GM12878 (cell line): ENCODE measurements at regions of chr10 and their contacts with region 1.

Region 1: GRCh38 chr10:110007701-110008517 is at the start of gene ADD3:
- DNase-seq: peak; percentile 48
- ATAC-seq: peak; percentile 81
- H3K4me3 ChIP-seq: peak within 1 kb of the TSS; percentile 90
- H3K27ac ChIP-seq: peak within 1 kb of the TSS; percentile 56
- H3K4me1 ChIP-seq: peaks cover 27% of the 10 kb centered on the region
- H3K27me3 ChIP-seq: no peaks in the 10 kb centered on the region
- CTCF ChIP-seq: no peak
- EP300 ChIP-seq: no peak
- POLR2A ChIP-seq: peak; percentile 79
- RAD21 ChIP-seq: no peak
- polyA plus RNA-seq, gene ADD3: 27.3 to 28.5 TPM

Region 2: GRCh38 chr10:109934958-109935706 is 72.8 kb before region 1 on chr10:
- CTCF ChIA-PET with region 1: no interaction called
- POLR2A ChIA-PET with region 1: no interaction called
- RAD21 ChIA-PET with region 1: no interaction called
- SMC1A ChIA-PET with region 1: no interaction called
- in situ Hi-C with region 1: no loop called
- intact Hi-C with region 1: no loop called
- DNase-seq: no peak
- ATAC-seq: no peak
- H3K4me3 ChIP-seq: no peak overlapping the region
- H3K27ac ChIP-seq: no peak overlapping the region
- H3K4me1 ChIP-seq: no peaks in the 10 kb centered on the region
- H3K27me3 ChIP-seq: no peaks in the 10 kb centered on the region
- CTCF ChIP-seq: no peak
- EP300 ChIP-seq: no peak
- POLR2A ChIP-seq: no peak
- RAD21 ChIP-seq: no peak

Region 3: DNA sequence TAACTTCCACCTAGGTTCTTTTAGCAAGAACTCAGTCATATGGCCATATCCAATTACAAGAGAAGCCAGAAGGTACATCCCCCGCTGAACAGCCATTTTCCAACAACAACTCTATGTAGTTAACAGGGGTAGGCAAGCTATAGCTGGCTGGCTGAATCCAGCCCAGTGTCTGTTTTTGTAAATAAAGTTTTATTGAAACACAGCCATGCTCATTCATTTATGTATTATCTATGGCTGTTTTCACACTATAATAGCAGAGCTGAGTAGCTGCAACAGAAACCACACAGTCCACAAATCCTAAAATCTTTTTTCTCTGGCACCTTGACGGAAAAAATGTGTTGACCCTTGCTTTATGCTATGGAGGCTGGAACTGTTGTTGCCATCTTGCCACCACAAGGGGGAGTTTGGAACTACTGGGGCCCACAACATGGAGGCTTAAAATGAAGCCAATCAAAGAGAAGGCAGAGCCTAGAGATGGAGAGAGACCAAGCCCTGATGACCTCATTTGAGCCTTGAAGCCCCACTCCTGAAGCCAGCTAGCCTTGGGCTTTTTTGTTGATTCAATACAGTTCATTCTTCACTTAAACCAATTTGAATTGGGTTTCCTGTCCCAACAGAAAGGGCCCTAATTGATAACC is 51.3 kb before region 1 on chr10:
- CTCF ChIA-PET with region 1: interaction called, 4 read pairs
- POLR2A ChIA-PET with region 1: interaction called, 3 read pairs
- RAD21 ChIA-PET with region 1: interaction called, 7 read pairs
- SMC1A ChIA-PET with region 1: interaction called, 8 read pairs
- in situ Hi-C with region 1: no loop called
- intact Hi-C with region 1: loop called (anchors 5 kb)
- DNase-seq: no peak
- ATAC-seq: peak; percentile 87
- H3K4me3 ChIP-seq: no peak overlapping the region
- H3K27ac ChIP-seq: peak overlapping the region; percentile 55
- H3K4me1 ChIP-seq: peaks cover 23% of the 10 kb centered on the region
- H3K27me3 ChIP-seq: no peaks in the 10 kb centered on the region
- CTCF ChIP-seq: peak; percentile 57 to 76 (median 67)
- EP300 ChIP-seq: no peak
- POLR2A ChIP-seq: no peak
- RAD21 ChIP-seq: peak; percentile 58

Region 4: DNA sequence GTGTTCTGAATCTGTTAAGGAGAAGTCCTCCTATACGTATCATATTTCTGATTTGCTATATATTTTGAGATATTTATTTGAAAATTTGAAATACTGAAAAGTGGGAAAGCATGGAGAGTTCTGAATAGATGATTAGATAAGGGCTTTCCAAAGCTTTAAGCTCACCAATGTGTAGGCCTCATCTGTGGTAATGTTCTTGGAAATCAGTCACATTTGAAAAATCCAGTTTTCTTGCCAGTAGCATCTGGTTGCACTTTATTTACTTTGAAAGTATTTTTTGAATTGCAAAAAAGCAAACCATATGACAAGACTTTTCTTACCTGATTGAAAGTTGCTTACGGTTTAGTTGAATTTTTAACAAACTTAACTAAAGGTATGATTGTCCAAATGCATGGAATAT is 21.5 kb after region 1 on chr10:
- CTCF ChIA-PET with region 1: interaction called, 8 read pairs
- POLR2A ChIA-PET with region 1: interaction called, 12 read pairs
- RAD21 ChIA-PET with region 1: interaction called, 3 read pairs
- SMC1A ChIA-PET with region 1: interaction called, 15 read pairs
- in situ Hi-C with region 1: no loop called
- intact Hi-C with region 1: no loop called
- DNase-seq: no peak
- ATAC-seq: no peak
- H3K4me3 ChIP-seq: no peak overlapping the region
- H3K27ac ChIP-seq: no peak overlapping the region
- H3K4me1 ChIP-seq: no peaks in the 10 kb centered on the region
- H3K27me3 ChIP-seq: no peaks in the 10 kb centered on the region
- CTCF ChIP-seq: no peak
- EP300 ChIP-seq: no peak
- POLR2A ChIP-seq: no peak
- RAD21 ChIP-seq: no peak

Region 5: GRCh38 chr10:110067960-110068770 is 60.3 kb after region 1 on chr10:
- CTCF ChIA-PET with region 1: interaction called, 3 read pairs
- POLR2A ChIA-PET with region 1: interaction called, 10 read pairs
- RAD21 ChIA-PET with region 1: interaction called, 17 read pairs
- SMC1A ChIA-PET with region 1: interaction called, 4 read pairs
- in situ Hi-C with region 1: no loop called
- intact Hi-C with region 1: no loop called
- DNase-seq: no peak
- ATAC-seq: peak; percentile 75
- H3K4me3 ChIP-seq: no peak overlapping the region; the same call in none of the 2 replicates
- H3K27ac ChIP-seq: peak overlapping the region; percentile 95
- H3K4me1 ChIP-seq: peaks cover 62% of the 10 kb centered on the region
- H3K27me3 ChIP-seq: no peaks in the 10 kb centered on the region
- CTCF ChIP-seq: no peak
- EP300 ChIP-seq: no peak
- POLR2A ChIP-seq: no peak
- RAD21 ChIP-seq: no peak

Region 6: GRCh38 chr10:110081911-110082310 is 74.0 kb after region 1 on chr10:
- CTCF ChIA-PET with region 1: interaction called, 3 read pairs
- POLR2A ChIA-PET with region 1: interaction called, 4 read pairs
- RAD21 ChIA-PET with region 1: interaction called, 60 read pairs
- SMC1A ChIA-PET with region 1: interaction called, 43 read pairs
- in situ Hi-C with region 1: no loop called
- intact Hi-C with region 1: loop called (anchors 2 kb)
- DNase-seq: no peak
- ATAC-seq: peak; percentile 11
- H3K4me3 ChIP-seq: no peak overlapping the region
- H3K27ac ChIP-seq: peak overlapping the region; percentile 57; the same call in 1 of the 2 replicates
- H3K4me1 ChIP-seq: peaks cover 22% of the 10 kb centered on the region
- H3K27me3 ChIP-seq: no peaks in the 10 kb centered on the region
- CTCF ChIP-seq: no peak
- EP300 ChIP-seq: no peak
- POLR2A ChIP-seq: no peak
- RAD21 ChIP-seq: no peak

Region 7: DNA sequence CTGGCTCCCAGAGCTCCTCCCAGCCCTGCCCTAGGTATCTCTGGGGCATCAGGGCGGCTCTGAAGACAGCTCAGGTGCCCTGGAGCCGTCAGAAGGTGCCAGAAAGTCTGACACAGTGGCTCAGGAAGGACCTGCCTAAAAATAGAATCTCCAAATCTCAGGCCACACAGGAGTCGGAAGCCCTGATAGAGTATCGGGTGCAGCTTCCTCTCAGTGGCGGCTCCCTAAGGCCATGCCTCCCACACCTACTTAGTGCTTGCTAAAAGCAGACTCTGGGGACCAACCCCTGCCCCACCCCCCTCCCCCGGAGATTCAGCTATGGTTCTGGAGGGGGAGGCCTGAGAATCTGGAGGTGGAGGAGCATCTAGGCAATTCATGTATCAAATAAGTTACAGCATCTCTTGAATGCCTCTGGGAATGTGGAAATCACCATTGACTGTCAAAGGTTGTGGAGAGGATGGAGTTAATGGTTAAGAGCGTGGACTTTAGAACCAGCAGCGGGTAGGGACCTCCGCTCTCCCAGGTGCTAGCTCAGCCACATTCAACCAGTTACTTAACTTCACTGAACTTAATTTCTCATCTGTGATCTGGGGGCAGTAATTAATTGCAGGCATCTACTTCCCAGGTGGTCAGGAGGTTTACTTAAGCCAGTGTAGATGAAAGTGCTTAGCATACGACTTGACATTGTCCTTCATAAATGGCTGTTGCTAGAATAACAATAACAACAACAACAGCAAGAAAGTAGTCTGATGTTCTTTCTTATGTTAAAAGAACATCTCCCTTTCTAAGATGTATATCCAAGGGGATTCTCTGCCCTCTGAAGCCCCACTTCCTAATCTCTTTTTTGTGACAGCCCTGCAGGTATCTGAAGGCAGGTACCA is 160.9 kb after region 1 on chr10:
- CTCF ChIA-PET with region 1: no interaction called
- POLR2A ChIA-PET with region 1: no interaction called
- RAD21 ChIA-PET with region 1: no interaction called
- SMC1A ChIA-PET with region 1: no interaction called
- in situ Hi-C with region 1: no loop called
- intact Hi-C with region 1: no loop called
- DNase-seq: no peak
- ATAC-seq: no peak; the same call in 2 of the 3 replicates
- H3K4me3 ChIP-seq: no peak overlapping the region
- H3K27ac ChIP-seq: no peak overlapping the region
- H3K4me1 ChIP-seq: no peaks in the 10 kb centered on the region; the same call in 1 of the 2 replicates
- H3K27me3 ChIP-seq: peaks cover 12 to 13% of the 10 kb centered on the region in 2 experiments
- CTCF ChIP-seq: no peak
- EP300 ChIP-seq: no peak
- POLR2A ChIP-seq: no peak
- RAD21 ChIP-seq: no peak